Activated T-helper 2 cell treated with anti-CD3 and anti-CD28 coated beads, Interferon-gamma antibody, Interleukin-2, Interleukin-4, amounts not matched to agents 10 μg/mL and 5 μg/mL and 100 μg/mL, durations not matched to agents 14 hours and 24 hours and 36 hours (primary cell): ENCODE measurements at regions of chr12 and their contacts with region 1.

Region 1: DNA sequence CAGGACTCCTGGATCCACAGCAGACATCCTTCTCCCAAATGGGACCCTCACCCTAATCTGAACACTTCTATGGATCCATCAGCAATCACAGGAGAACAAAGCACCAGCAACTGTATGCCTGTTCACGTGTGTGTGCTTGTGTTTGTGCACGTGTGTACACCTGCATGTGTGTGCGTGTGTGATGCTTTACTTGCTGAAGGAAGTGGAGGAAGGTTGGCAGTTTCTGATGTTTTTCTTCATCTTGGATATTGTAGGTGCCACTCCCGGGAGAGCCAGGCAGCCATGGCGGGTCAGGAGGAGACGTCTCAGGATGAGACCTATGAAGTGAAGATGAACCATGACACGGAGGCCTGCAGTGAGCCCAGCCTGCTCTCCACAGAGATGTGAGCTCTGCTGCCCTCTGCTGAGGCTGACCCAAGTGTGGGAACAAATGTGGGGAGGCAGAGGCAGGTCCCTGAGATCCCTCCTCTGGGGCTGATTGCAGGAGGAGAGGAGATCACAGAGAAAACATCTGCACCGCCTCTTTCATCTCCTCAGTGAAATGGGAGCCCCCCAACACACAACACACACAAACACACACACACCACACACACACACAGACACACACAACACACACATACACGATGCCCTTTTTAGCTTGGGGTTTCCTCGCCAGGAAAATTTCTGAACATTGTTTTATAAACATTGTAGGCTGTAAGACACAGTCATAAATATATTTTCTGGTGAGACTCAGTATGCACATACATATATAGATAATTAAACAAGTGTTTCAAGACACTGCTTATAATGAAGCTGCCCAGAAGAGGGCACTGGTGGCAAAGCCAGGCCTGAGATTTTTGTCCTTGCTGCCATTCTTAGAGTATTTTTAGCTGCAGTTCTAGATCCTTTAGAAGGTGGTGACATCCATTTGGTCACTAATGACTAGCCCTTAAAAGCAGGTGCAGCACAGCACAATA is 112.2 kb upstream of the FKBP4 start:
- DNase-seq: peak; percentile 47
- H3K4me3 Mint-ChIP-seq: no peak overlapping the region
- H3K27ac Mint-ChIP-seq: peak overlapping the region; percentile 61
- H3K4me1 Mint-ChIP-seq: peaks cover 5% of the 10 kb centered on the region
- H3K27me3 Mint-ChIP-seq: no peaks in the 10 kb centered on the region

Region 2: GRCh38 chr12:2034633-2035430 is 647.7 kb before region 1 on chr12:
- intact Hi-C with region 1: no loop called
- DNase-seq: peak; percentile 79
- H3K4me3 Mint-ChIP-seq: peak overlapping the region; percentile 38
- H3K27ac Mint-ChIP-seq: no peak overlapping the region
- H3K4me1 Mint-ChIP-seq: peaks cover 11% of the 10 kb centered on the region
- H3K27me3 Mint-ChIP-seq: peaks cover 53% of the 10 kb centered on the region

Region 3: DNA sequence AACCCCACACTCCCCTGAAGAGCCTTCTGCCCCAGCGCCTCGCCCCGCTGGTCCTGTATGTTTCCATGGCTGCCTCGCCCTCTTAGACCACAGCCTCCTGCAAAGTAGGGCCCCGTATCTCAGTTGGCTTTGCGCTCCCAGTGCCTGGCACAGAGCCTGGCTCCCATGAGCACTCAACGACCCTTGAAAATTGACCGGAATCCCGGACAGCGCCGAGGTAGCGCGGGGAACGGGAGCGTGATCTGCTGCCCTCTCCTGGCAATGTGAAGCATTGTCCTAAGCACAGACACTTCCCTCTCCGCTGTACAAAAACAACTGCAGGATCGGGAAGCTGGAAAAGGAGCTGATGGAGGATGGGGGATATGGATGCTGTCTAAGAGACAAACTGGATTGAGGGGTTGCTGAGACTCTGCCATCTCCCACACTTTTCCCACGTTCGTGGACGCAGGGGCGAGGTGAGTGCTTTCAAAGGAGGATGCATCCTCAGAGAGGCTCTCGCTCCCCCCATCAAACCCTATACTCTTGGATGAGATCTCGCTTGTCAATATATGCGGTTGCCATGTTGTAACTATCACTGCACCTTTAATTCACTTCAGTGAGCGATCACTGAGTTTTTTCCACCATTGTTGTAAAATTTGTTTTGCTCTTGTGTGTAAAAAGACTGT is 101.5 kb after region 1 on chr12:
- intact Hi-C with region 1: loop called (anchors 1 kb)
- DNase-seq: peak; percentile 24
- H3K4me3 Mint-ChIP-seq: peak overlapping the region; percentile 28
- H3K27ac Mint-ChIP-seq: no peak overlapping the region
- H3K4me1 Mint-ChIP-seq: peaks cover 9% of the 10 kb centered on the region
- H3K27me3 Mint-ChIP-seq: peaks cover 37% of the 10 kb centered on the region

Region 4: GRCh38 chr12:2912216-2912575 is 229.6 kb after region 1 on chr12:
- intact Hi-C with region 1: no loop called
- DNase-seq: no peak
- H3K4me3 Mint-ChIP-seq: no peak overlapping the region
- H3K27ac Mint-ChIP-seq: no peak overlapping the region
- H3K4me1 Mint-ChIP-seq: no peaks in the 10 kb centered on the region
- H3K27me3 Mint-ChIP-seq: no peaks in the 10 kb centered on the region